A549 (cell line): ENCODE measurements at regions of chr3 and their contacts with region 1.

Region 1: GRCh38 chr3:9302425-9303181 is 53.2 kb upstream of the SRGAP3 start:
- DNase-seq: peak; percentile 72 to 79
- ATAC-seq: peak; percentile 95 to 99
- H3K4me3 ChIP-seq: no peak overlapping the region
- H3K27ac ChIP-seq: no peak overlapping the region
- H3K4me1 ChIP-seq: no peaks in the 10 kb centered on the region
- CTCF ChIP-seq: peak; percentile 92
- EP300 ChIP-seq: no peak
- POLR2A ChIP-seq: no peak
- RAD21 ChIP-seq: peak; percentile 96

Region 2: GRCh38 chr3:8970971-8971589 is 331.5 kb before region 1 on chr3:
- CTCF ChIA-PET with region 1: interaction called, 190 read pairs
- POLR2A ChIA-PET with region 1: no interaction called
- DNase-seq: peak; percentile 63 to 65
- ATAC-seq: peak; percentile 59 to 83; a peak in 4 of 6 replicates
- H3K4me3 ChIP-seq: no peak overlapping the region
- H3K27ac ChIP-seq: no peak overlapping the region
- H3K4me1 ChIP-seq: no peaks in the 10 kb centered on the region
- CTCF ChIP-seq: peak; percentile 97
- EP300 ChIP-seq: no peak
- POLR2A ChIP-seq: no peak
- RAD21 ChIP-seq: peak; percentile 92 to 96

Region 3: DNA sequence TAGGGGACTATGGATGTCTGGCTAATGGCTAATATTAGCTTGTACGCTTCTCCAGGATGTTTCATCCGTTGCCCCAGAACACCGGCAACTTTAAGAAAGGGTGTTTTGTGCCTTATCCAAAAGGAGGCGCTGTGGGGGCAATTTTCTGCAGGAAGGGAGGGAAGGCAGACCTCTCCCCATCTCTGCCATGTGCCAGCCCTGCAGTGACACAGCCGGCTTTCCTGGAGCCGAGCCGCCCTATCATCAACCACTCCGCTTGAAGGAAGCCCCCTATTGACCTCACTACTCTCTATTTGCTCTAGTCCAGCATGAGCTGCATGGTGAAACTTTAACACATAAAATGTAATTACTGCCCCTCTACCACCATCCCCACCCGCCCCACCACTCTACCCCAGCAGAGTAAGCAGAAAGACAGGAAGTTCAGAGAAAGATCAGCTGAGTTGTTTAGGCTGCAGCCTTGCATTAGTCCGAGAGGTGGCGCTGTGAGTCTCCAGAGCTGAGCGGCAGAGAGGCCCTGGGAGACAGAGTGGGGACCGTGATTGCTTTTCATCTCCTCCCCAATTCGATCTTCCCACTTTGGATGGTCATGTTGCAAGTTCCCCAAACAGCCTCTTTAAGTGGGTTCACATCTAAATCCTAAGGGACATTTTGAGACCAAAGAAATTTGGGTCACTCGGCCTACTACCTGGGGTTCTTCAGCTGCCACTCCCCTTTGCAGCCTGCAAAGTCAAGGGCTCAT is 314.8 kb before region 1 on chr3:
- CTCF ChIA-PET with region 1: interaction called, 86 read pairs
- POLR2A ChIA-PET with region 1: no interaction called
- DNase-seq: peak; percentile 53 to 71
- ATAC-seq: peak; percentile 72 to 92; a peak in 5 of 6 replicates
- H3K4me3 ChIP-seq: no peak overlapping the region
- H3K27ac ChIP-seq: no peak overlapping the region
- H3K4me1 ChIP-seq: no peaks in the 10 kb centered on the region
- CTCF ChIP-seq: peak; percentile 65
- EP300 ChIP-seq: no peak
- POLR2A ChIP-seq: no peak
- RAD21 ChIP-seq: peak; percentile 63 to 78

Region 4: GRCh38 chr3:8996681-8997121 is 305.9 kb before region 1 on chr3:
- CTCF ChIA-PET with region 1: interaction called, 25 read pairs
- POLR2A ChIA-PET with region 1: no interaction called
- DNase-seq: no peak
- ATAC-seq: peak; percentile 32 to 71; a peak in 3 of 6 replicates
- H3K4me3 ChIP-seq: no peak overlapping the region
- H3K27ac ChIP-seq: no peak overlapping the region
- H3K4me1 ChIP-seq: no peaks in the 10 kb centered on the region
- CTCF ChIP-seq: no peak
- EP300 ChIP-seq: no peak
- POLR2A ChIP-seq: no peak
- RAD21 ChIP-seq: no peak

Region 5: GRCh38 chr3:9314796-9315195 is 12.2 kb after region 1 on chr3:
- CTCF ChIA-PET with region 1: interaction called, 49 read pairs
- POLR2A ChIA-PET with region 1: no interaction called
- DNase-seq: no peak
- ATAC-seq: no peak
- H3K4me3 ChIP-seq: no peak overlapping the region
- H3K27ac ChIP-seq: no peak overlapping the region
- H3K4me1 ChIP-seq: no peaks in the 10 kb centered on the region
- CTCF ChIP-seq: no peak
- EP300 ChIP-seq: no peak
- POLR2A ChIP-seq: no peak
- RAD21 ChIP-seq: no peak

Region 6: DNA sequence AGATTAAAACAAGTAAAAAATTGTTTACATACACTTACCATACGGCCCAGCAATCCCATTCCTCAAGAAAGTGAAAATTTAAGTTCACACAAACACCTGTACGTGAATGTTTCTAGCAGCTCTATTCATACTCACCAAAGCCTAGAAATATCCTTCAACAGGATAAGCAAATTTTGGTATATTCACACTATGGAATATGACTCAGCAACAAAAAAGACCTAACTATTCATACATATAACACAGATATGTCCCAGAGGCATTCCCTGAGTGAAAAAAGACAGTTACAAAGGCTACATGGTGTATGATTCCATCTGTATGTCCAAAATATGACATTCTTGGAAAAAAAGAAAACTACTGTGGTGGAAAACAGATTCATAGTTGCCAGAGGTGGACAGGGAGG is 20.2 kb after region 1 on chr3:
- CTCF ChIA-PET with region 1: interaction called, 13 read pairs
- POLR2A ChIA-PET with region 1: no interaction called
- DNase-seq: no peak
- ATAC-seq: no peak
- H3K4me3 ChIP-seq: no peak overlapping the region
- H3K27ac ChIP-seq: no peak overlapping the region
- H3K4me1 ChIP-seq: no peaks in the 10 kb centered on the region
- CTCF ChIP-seq: no peak
- EP300 ChIP-seq: no peak
- POLR2A ChIP-seq: no peak
- RAD21 ChIP-seq: no peak

Region 7: GRCh38 chr3:9536212-9536611 is 233.6 kb after region 1 on chr3:
- CTCF ChIA-PET with region 1: no interaction called
- POLR2A ChIA-PET with region 1: no interaction called
- DNase-seq: no peak
- ATAC-seq: peak; percentile 21 to 50; a peak in 2 of 6 replicates
- H3K4me3 ChIP-seq: no peak overlapping the region
- H3K27ac ChIP-seq: no peak overlapping the region
- H3K4me1 ChIP-seq: no peaks in the 10 kb centered on the region
- CTCF ChIP-seq: no peak
- EP300 ChIP-seq: no peak
- POLR2A ChIP-seq: no peak
- RAD21 ChIP-seq: no peak